ENCODE measurements at regions of chr11 and their contacts with region 1.

Region 1: GRCh38 chr11:117410861-117411710 is 83.4 kb downstream of the CEP164 start:
- DNase-seq: no peak
- H3K4me3 ChIP-seq: no peak overlapping the region
- H3K4me3 Mint-ChIP-seq: no peak overlapping the region
- H3K27ac ChIP-seq: no peak overlapping the region
- H3K27ac Mint-ChIP-seq: no peak overlapping the region
- H3K4me1 ChIP-seq: no peaks in the 10 kb centered on the region
- H3K4me1 Mint-ChIP-seq: no peaks in the 10 kb centered on the region
- H3K27me3 ChIP-seq: no peaks in the 10 kb centered on the region
- H3K27me3 Mint-ChIP-seq: no peaks in the 10 kb centered on the region

Region 2: GRCh38 chr11:117426269-117426685 is 15.2 kb after region 1 on chr11:
- CTCF ChIA-PET with region 1: interaction called, 36 read pairs
- POLR2A ChIA-PET with region 1: no interaction called
- intact Hi-C with region 1: no loop called
- DNase-seq: peak in 4 of 5 donors; percentile 42 to 59 (median 52)
- H3K4me3 ChIP-seq: no peak overlapping the region
- H3K4me3 Mint-ChIP-seq: peak overlapping the region in 4 of 8 donors; percentile 6 to 60 (median 36)
- H3K27ac ChIP-seq: no peak overlapping the region
- H3K27ac Mint-ChIP-seq: no peak overlapping the region
- H3K4me1 ChIP-seq: peaks cover 6% of the 10 kb centered on the region
- H3K4me1 Mint-ChIP-seq: peaks cover 0 to 13% (median under 1%) of the 10 kb centered on the region in 4 donors
- H3K27me3 ChIP-seq: no peaks in the 10 kb centered on the region
- H3K27me3 Mint-ChIP-seq: peaks cover 0 to 1% of the 10 kb centered on the region in 2 donors